T-cell (primary cell): ENCODE measurements at regions of chr1 and their contacts with region 1.

Region 1: DNA sequence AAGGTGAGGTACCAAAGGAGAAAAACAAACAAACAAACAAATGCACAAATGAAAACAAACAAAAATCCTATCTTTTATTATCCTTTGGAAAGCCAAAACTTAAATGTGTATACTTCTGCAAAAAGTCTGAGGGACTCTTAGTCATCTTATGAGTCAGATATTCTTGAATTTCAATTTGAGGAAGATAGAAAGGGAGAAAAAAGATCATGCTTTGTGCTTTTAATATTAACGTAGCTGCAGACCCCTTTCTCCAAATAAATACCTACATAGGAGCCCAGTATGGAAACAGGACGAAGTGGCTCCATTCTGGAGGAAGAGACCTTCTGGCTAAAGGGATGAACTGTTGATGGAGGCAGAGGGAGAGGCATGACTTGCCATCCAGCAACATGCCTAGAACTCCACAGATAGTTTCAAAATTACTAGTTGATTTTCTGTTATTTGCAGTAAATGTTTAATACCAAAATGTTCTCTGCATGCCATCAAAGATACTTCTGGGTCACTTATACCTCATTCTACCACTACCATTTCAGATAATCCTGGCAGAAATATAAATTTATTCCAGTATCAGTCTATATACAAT is 25.4 kb downstream of the NUP210L start:
- DNase-seq: no peak
- ATAC-seq: no peak
- H3K4me3 ChIP-seq: no peak overlapping the region
- H3K4me3 Mint-ChIP-seq: no peak overlapping the region
- H3K27ac ChIP-seq: no peak overlapping the region
- H3K27ac Mint-ChIP-seq: no peak overlapping the region
- H3K4me1 ChIP-seq: no peaks in the 10 kb centered on the region
- H3K4me1 Mint-ChIP-seq: no peaks in the 10 kb centered on the region
- H3K27me3 ChIP-seq: no peaks in the 10 kb centered on the region
- H3K27me3 Mint-ChIP-seq: no peaks in the 10 kb centered on the region

Region 2: DNA sequence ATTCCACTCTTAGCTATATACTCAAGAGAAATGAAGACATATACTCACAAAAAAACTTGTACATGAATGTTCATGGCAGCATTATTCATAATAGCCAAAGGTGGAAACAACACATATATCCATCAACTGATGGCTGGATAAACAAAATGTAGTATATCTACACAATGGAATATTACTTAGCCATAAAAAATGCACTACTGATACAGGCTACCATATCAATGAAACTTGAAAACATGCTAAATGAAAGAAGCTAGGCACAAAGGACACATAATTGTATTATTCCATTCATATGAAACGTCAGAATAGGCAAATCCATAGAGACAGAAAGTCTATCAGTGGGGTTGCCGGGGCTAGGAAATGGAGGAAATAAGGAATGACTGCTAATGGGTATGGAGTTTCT is 41.9 kb before region 1 on chr1:
- CTCF ChIA-PET with region 1: no interaction called
- POLR2A ChIA-PET with region 1: interaction called in 1 of 2 experiments, 11 read pairs
- DNase-seq: no peak
- ATAC-seq: no peak
- H3K4me3 ChIP-seq: no peak overlapping the region
- H3K4me3 Mint-ChIP-seq: no peak overlapping the region
- H3K27ac ChIP-seq: no peak overlapping the region
- H3K27ac Mint-ChIP-seq: no peak overlapping the region
- H3K4me1 ChIP-seq: no peaks in the 10 kb centered on the region
- H3K4me1 Mint-ChIP-seq: no peaks in the 10 kb centered on the region
- H3K27me3 ChIP-seq: peaks cover 0 to 2% of the 10 kb centered on the region in 2 experiments
- H3K27me3 Mint-ChIP-seq: peaks cover 0 to 2% of the 10 kb centered on the region in 2 donors

Region 3: DNA sequence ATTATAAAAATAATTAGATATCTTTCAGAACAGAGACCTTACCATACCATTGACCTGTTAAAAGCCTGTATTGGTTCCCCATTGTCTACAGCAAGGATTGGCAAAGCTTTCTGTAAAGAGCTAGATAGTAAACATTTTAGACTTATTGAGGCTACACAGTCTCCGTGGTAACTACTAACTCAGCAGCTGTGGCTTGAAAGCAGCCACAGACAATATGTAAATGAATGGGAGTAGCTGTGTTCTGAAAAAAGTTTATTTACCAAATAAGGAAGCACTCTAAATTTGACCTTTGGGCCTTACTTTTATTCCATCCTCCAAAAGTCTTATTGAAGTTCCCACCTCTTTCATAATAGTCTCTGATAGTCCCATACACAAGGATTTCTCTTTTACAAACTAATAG is 14.3 kb before region 1 on chr1:
- CTCF ChIA-PET with region 1: no interaction called
- POLR2A ChIA-PET with region 1: no interaction called
- DNase-seq: peak in 1 of 35 experiments; percentile 33
- ATAC-seq: peak in 1 of 4 experiments; percentile 79
- H3K4me3 ChIP-seq: no peak overlapping the region
- H3K4me3 Mint-ChIP-seq: no peak overlapping the region
- H3K27ac ChIP-seq: no peak overlapping the region
- H3K27ac Mint-ChIP-seq: no peak overlapping the region
- H3K4me1 ChIP-seq: peaks cover 4 to 10% of the 10 kb centered on the region in 2 experiments
- H3K4me1 Mint-ChIP-seq: peaks cover 11 to 12% (median 12%) of the 10 kb centered on the region in 3 donors
- H3K27me3 ChIP-seq: no peaks in the 10 kb centered on the region
- H3K27me3 Mint-ChIP-seq: no peaks in the 10 kb centered on the region